ENCODE measurements at regions of chr6 and their contacts with region 1.

Region 1: DNA sequence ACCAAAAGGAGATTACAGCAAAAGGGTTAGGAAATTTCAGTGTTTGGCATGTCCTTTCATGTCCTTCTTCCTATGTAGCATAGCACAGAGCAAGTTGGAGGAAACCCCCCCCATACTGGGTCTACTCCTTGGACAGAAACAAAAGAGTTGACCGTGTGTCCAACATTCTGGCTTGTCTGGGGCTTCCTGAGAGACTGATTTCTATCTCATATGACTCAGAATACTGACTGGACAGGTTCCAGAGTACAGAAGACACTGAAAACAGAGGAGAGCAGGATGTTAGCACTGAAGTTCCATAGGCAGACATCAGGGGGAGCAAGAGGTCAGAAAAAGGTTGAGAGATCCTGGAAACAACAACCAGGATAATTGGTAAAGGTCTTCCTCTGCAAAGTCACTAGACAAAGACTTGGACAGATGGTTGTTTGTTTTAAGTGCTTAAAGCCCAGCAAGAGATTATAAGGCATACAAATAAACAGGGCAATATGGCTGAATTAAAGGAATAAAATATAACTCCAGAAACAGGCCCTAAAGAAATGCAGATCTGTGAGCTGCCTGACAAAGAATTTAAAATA is 48.4 kb downstream of the USP49 start:
- DNase-seq: peak; percentile 62
- H3K4me3 Mint-ChIP-seq: no peak overlapping the region
- H3K27ac Mint-ChIP-seq: no peak overlapping the region
- H3K4me1 Mint-ChIP-seq: peaks cover 16% of the 10 kb centered on the region
- H3K27me3 Mint-ChIP-seq: no peaks in the 10 kb centered on the region

Region 2: GRCh38 chr6:41929924-41930323 is 83.2 kb after region 1 on chr6:
- CTCF ChIA-PET with region 1: no interaction called
- POLR2A ChIA-PET with region 1: no interaction called
- DNase-seq: no peak
- H3K4me3 Mint-ChIP-seq: no peak overlapping the region
- H3K27ac Mint-ChIP-seq: no peak overlapping the region
- H3K4me1 Mint-ChIP-seq: peaks cover 34% of the 10 kb centered on the region
- H3K27me3 Mint-ChIP-seq: no peaks in the 10 kb centered on the region

Region 3: DNA sequence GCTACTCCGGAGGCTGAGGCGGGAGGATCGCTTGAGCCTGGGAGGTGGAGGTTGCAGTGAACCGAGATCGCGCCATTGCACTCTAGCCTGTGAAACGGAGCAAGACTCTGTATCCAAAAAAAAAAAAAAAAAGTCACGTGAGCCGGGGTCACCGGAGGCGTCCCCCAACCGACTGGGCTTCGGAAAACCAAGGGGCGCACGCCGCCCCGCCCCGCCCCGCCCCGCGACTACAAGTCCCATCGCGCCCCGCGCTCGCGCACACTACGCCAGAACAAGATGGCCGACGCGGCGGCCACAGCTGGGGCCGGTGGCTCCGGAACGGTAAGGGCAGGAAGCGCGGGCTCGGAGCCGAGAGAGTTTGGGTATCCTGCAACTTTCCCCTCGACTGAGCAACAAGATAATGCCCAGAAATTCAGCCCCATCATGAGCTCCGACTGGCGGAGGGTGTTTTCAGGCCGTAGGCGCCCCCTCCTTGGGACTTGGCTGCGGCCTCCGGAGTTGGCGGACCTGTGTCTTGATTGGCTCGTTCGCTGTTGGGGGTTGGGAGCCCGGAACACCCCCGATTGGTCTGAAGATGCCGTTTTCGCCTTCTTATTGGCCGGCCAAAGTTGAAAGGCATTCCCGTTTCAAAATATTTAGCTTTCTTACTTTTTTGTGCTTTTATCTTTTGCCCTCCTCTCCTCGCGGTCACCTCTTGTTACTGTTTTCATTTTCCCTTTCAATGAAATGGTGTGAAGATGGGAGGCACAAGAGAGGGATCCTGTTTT is 203.7 kb after region 1 on chr6 and contains the start of gene TAF8:
- CTCF ChIA-PET with region 1: interaction called, 138 read pairs
- POLR2A ChIA-PET with region 1: no interaction called
- DNase-seq: peak; percentile 91
- H3K4me3 Mint-ChIP-seq: peak within 1 kb of the TSS; percentile 82
- H3K27ac Mint-ChIP-seq: peak within 1 kb of the TSS; percentile 94
- H3K4me1 Mint-ChIP-seq: peaks cover 75% of the 10 kb centered on the region
- H3K27me3 Mint-ChIP-seq: no peaks in the 10 kb centered on the region
- total RNA-seq, gene TAF8: 48.0 to 55.1 TPM